Mammary epithelial cell (primary cell): ENCODE measurements at regions of chr7 and their contacts with region 1.

Region 1: DNA sequence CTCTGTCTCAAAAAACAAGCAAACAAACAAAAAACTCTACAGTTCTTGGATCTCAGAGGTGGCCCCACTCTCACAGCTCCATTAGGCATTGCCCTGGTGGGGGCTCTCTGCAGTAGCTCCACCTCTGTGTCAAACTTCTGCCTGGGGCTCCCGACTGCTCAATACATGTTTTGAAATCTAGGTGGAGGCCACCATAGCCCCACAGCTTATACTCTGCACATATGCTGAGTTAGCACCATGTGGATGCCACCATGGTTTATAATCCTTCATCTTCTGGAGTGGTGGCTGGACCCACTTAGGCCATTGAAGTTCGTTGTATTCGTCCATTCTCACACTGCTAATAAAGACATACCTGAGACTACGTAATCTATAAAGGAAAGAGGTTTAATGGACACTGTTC is 78.4 kb downstream of the SEPTIN14 start:
- DNase-seq: no peak
- H3K4me3 ChIP-seq: no peak overlapping the region
- H3K27ac ChIP-seq: no peak overlapping the region
- H3K4me1 ChIP-seq: no peaks in the 10 kb centered on the region
- H3K27me3 ChIP-seq: no peaks in the 10 kb centered on the region
- CTCF ChIP-seq: no peak

Region 2: DNA sequence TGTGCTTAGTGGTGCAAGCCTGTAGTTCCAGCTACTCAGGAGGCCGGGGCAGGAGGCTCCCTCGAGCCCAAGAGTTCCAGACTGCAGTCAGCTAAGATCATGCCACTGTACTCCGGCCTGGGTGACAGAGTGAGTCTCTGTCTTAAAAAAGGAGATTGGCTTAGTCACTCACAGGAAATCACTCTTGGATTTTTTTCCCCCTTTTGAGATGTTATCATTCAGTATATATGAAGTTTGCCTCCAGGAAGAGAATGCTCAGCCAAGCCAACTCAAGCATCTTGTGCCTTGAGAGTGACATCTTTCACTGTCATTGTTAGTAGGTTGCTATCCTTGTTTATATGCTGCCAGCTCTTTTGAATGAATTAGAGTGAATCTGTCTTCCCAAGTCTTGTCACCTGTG is 208.2 kb after region 1 on chr7:
- CTCF ChIA-PET with region 1: interaction called, 29 read pairs
- dilution Hi-C with region 1: no loop called
- in situ Hi-C with region 1: no loop called
- intact Hi-C with region 1: no loop called
- DNase-seq: no peak
- H3K4me3 ChIP-seq: no peak overlapping the region
- H3K27ac ChIP-seq: no peak overlapping the region
- H3K4me1 ChIP-seq: no peaks in the 10 kb centered on the region
- H3K27me3 ChIP-seq: no peaks in the 10 kb centered on the region
- CTCF ChIP-seq: no peak

Region 3: GRCh38 chr7:56028942-56029630 is 244.9 kb after region 1 on chr7:
- CTCF ChIA-PET with region 1: no interaction called
- dilution Hi-C with region 1: no loop called
- in situ Hi-C with region 1: no loop called
- intact Hi-C with region 1: no loop called
- DNase-seq: no peak
- H3K4me3 ChIP-seq: no peak overlapping the region
- H3K27ac ChIP-seq: no peak overlapping the region
- H3K4me1 ChIP-seq: peaks cover 7% of the 10 kb centered on the region
- H3K27me3 ChIP-seq: no peaks in the 10 kb centered on the region
- CTCF ChIP-seq: no peak